ENCODE measurements at regions of chr7 and their contacts with region 1.

Region 1: DNA sequence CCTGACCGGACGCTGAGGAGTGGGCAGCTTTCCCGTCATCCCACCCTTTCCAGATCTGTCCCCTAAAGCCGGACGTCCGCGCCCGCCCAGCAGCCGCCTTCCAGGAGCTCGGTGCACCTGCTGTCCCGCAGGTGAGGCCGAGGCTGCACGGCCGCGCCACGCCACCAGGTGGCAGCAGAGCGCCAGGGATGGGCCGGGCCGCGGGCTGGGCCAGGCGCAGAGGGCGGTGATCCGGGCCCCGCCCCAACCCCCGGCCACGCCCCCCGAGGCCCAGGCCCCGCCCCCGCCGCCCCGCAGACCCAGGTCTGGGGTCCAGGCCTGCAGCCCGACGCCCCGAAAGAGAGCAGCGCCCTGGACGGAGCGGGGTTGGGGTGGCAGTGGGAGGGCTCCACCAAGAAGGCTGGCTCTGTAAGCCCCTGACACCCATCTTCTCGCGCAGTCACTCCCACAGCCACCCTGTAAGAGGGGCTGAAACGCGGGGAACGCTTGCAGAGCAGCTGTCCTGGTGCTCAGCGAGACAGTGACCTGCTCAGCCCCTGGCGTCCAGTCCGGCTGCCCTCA is 32.2 kb downstream of the FOXL3 start:
- DNase-seq: peak; percentile 95
- H3K4me3 ChIP-seq: peak overlapping the region in 1 of 8 donors; percentile 43
- H3K27ac ChIP-seq: no peak overlapping the region
- H3K4me1 ChIP-seq: peaks cover 0 to 14% (median 10%) of the 10 kb centered on the region in 6 donors
- H3K27me3 ChIP-seq: peaks cover 0 to 46% (median 0%) of the 10 kb centered on the region in 7 donors
- CTCF ChIP-seq: peak; percentile 60 to 99 (median 94)
- POLR2A ChIP-seq: no peak

Region 2: DNA sequence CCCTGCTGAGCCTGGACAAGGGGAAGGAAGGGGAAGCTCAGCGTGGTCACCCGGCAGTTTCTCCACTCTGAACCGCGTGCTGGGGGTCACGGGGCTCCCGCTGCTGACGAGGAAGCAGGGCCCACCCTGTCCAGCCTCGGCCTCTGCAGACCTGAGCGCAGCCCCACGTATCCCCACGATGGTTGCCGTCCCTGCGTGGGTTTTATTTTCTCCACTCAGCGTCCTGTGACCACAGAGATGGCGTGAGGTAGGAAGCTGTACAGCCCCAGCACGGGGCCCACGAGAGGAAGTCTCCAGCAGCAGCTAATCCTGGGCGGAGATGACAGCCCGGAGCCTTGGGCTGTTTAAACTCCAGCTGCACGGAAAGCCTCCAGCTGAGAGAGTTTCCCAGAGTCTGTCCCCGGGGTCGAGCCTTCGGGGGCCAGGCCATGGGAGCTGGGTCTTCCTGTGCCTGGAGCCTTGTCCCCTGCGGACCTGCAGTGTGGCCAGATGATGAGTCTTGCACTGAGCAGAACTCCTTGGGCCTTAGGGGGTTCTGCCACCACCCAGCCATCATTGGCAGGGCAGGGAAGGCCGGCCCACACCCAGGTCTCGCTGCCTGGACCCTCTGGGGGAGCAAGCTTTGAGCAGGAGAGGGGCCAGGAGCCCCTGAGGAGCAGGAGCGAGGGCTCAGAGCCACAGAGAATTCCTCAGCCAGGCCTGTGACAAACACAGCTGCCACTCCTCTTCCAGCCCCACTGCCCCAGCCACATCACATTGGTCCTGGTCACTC is 202.6 kb before region 1 on chr7:
- intact Hi-C with region 1: no loop called
- DNase-seq: no peak
- H3K4me3 ChIP-seq: peak overlapping the region in 1 of 8 donors; percentile 51
- H3K27ac ChIP-seq: peak overlapping the region in 7 of 8 donors; percentile 61 to 85 (median 78)
- H3K4me1 ChIP-seq: peaks cover 0 to 56% (median 17%) of the 10 kb centered on the region in 6 donors
- H3K27me3 ChIP-seq: peaks cover 0 to 40% (median 0%) of the 10 kb centered on the region in 7 donors
- CTCF ChIP-seq: no peak
- POLR2A ChIP-seq: no peak

Region 3: DNA sequence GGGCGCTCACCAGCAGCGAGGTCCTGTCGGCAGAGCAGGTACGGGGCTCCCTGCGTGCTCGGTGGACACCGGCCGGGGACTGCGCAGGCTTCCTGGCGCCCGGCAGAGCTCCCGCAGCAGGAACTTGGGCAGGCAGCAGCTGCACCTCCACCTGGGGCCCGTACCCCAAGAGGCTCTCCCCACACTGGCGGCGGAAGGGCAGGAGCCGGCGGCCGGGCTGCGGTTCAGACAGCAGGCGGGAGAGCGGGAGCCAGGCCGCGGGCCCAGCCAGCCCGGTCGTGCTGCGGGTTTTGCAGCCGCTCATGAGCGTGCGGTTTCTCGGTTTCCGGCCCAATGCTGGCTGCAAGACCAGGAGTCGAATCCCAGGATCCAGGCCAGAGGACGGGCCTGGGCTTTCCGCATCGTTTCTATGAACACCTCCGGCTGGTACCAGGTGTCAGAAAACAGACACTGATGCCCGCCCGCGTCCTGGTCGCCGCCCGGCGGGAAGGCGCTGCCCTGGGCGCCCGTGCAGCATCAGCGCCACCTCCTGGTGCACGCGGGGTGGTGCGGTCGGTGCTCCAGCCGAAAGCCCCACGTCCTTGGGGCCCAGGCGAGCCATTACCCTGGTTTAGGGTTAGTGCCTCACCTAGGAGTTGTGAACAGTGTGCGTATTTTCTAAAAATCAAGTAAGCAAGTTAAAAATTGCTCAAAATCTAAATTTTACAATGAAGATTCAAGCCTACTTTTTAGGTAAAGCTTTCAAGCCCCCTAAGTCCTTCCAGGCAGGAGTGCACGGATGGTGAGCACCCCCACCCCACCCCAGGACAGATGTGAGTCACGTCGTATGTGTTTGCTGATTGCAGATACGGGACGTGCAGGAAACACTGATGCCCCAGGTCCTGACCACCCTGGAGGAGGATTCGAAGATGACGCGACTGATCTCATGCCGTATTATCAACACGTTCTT is 452.2 kb after region 1 on chr7:
- intact Hi-C with region 1: loop called (anchors 5 kb)
- DNase-seq: peak; percentile 88
- H3K4me3 ChIP-seq: peak overlapping the region in 1 of 8 donors; percentile 7
- H3K27ac ChIP-seq: no peak overlapping the region
- H3K4me1 ChIP-seq: peaks cover 4 to 49% (median 32%) of the 10 kb centered on the region in 6 donors
- H3K27me3 ChIP-seq: no peaks in the 10 kb centered on the region
- CTCF ChIP-seq: peak; percentile 41 to 94 (median 88)
- POLR2A ChIP-seq: no peak

Region 4: GRCh38 chr7:859359-860030 is 537.3 kb after region 1 on chr7:
- intact Hi-C with region 1: loop called (anchors 5 kb)
- DNase-seq: no peak
- H3K4me3 ChIP-seq: no peak overlapping the region
- H3K27ac ChIP-seq: no peak overlapping the region
- H3K4me1 ChIP-seq: no peaks in the 10 kb centered on the region
- H3K27me3 ChIP-seq: no peaks in the 10 kb centered on the region
- CTCF ChIP-seq: no peak
- POLR2A ChIP-seq: no peak